ENCODE measurements at regions of chr12 and their contacts with region 1.

Region 1: DNA sequence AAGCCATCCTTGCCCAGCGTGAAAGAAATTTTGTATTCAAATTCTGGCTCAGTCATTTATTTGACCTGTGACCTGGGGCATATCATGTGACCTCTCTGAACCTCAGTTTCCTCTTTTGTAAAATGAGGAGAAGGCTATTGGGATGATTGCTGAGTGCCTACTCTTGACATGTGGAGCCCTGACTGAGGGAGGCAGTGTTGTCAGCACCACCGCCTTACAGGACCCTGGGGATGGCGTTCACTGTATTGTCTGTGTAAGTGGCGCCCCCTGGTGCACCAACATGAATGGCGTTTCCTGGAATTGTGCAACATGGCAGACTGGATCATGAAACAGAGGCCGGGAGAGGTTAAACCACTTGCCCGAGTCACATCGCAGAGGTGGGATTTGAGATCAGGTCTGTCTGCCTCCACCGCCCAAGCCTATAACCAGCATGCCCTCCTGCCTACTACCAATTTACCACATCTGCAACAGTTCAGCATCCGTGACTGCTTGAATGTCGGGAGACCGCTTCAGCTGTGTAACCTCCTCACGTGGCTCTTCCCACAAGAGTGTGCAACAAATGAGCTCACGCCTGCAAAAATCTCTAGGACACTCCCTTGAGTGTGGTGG is 20.1 kb upstream of the CCDC63 start:
- DNase-seq: peak; percentile 92
- ATAC-seq: peak; percentile 94

Region 2: DNA sequence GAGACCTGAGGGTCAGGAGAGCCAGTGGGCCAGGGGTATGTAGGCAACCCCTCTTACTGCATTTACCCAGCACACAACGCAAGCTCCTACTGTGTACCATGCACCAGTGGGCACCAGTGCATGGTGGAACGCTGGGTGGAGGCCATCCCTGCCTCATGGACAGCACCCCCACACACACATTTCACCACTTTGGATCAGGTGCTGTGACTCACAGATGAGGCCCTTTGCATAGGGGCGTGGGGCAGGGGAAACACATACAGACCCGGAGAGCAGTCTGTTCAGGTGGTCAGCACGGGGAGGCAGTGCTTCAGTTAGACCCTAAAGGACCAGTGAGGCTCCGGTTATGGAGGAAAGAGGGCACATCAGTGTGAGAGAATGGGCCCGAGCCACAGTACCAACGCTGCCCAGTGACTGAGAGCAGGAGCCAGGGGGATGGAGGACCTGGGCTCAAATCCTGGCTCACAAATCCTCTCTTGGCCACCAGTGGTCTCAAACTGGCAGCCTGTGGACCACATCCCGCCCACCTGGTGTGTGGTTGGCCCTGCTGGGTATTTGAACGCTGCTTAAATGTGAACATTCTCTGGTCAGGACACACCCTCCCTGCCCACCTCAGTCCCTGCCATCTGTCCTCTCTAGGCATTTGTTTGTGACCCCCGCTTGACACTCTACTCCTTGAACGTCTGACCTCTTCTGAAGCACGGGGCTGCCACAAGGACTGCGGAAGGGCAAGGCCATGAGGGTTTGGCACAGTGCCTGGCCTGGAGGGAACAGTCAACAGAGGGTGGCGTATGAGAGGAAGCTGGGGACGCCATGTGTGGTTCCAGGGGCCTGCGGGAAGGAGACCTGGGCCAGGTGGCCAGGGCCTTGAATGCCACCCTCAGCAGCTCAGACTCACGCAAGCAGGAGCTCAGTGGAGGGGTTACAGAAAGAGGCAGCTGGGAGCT is 1066.4 kb before region 1 on chr12:
- intact Hi-C with region 1: no loop called
- DNase-seq: no peak
- ATAC-seq: peak; percentile 83

Region 3: GRCh38 chr12:110449799-110450497 is 376.7 kb before region 1 on chr12 and contains the start of gene ARPC3:
- intact Hi-C with region 1: loop called (anchors 5 kb)
- DNase-seq: peak; percentile 98
- ATAC-seq: peak; percentile 99
- total RNA-seq, gene ARPC3: 94.4 TPM

Region 4: DNA sequence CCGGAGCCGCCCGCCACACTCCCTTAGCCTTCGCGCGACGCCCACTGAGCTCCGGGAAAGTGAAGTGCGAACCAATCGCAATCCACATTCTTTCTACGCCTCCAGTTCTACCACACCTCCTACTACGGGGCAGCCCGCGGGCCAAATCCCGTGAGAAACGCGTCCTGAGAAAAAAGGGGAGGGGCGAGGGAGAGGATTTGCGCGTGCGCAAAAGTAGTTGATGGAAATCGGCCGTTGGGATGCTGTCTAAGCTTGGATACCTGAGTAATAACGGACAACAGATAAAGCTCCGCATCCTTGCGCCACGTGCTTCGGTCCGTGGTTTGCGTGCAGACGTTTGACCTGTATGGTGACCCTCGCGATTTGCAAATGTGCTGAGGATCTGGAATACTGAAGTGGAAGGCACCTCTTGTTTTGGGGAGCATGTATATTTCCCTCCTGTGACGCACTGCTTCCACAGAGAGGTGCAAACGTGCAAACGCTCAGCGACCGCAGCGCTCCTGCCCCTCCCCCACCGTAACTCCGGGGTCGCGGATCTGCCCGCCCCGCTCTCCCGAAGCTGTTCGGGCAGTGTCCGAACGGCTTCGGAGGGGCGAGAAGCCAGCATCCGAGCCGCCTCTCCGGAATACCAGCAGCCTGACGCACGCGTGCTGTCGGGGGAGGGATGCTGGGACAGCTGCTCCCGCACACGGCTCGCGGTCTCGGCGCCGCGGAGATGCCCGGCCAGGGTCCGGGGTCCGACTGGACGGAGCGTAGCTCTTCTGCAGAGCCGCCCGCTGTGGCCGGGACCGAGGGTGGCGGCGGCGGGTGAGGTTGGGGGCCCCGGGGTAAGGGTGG is 358.3 kb before region 1 on chr12 and contains the starts of genes FAM216A and GPN3:
- intact Hi-C with region 1: loop called (anchors 2 kb)
- DNase-seq: peak; percentile 98
- ATAC-seq: peak; percentile 96
- total RNA-seq, gene FAM216A: 4.8 TPM
- total RNA-seq, gene GPN3: 24.7 TPM

Region 5: DNA sequence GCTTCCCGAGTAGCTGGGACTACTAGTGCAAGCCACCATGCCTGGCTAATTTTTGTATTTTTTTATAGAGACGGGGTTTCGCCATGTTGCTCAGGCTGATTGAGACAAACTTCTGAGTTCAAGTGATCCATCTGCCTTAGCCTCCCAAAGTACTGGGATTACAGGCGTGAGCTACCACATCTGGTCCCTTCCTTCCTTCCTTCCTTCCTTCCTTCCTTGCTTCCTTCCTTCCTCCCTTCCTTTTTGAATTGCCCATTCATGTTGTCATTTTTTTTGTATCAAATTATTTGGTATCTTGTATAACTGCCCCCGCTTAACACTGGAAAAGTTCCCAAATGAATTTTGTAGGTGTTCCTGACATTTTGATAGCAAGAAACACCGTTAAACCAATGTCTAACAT is 312.9 kb before region 1 on chr12:
- intact Hi-C with region 1: loop called (anchors 5 kb)
- DNase-seq: no peak
- ATAC-seq: no peak

Region 6: GRCh38 chr12:110577717-110578521 is 248.8 kb before region 1 on chr12:
- intact Hi-C with region 1: no loop called
- DNase-seq: no peak
- ATAC-seq: no peak

Region 7: GRCh38 chr12:110622582-110622981 is 204.1 kb before region 1 on chr12:
- intact Hi-C with region 1: loop called (anchors 5 kb)
- DNase-seq: no peak
- ATAC-seq: no peak

Region 8: DNA sequence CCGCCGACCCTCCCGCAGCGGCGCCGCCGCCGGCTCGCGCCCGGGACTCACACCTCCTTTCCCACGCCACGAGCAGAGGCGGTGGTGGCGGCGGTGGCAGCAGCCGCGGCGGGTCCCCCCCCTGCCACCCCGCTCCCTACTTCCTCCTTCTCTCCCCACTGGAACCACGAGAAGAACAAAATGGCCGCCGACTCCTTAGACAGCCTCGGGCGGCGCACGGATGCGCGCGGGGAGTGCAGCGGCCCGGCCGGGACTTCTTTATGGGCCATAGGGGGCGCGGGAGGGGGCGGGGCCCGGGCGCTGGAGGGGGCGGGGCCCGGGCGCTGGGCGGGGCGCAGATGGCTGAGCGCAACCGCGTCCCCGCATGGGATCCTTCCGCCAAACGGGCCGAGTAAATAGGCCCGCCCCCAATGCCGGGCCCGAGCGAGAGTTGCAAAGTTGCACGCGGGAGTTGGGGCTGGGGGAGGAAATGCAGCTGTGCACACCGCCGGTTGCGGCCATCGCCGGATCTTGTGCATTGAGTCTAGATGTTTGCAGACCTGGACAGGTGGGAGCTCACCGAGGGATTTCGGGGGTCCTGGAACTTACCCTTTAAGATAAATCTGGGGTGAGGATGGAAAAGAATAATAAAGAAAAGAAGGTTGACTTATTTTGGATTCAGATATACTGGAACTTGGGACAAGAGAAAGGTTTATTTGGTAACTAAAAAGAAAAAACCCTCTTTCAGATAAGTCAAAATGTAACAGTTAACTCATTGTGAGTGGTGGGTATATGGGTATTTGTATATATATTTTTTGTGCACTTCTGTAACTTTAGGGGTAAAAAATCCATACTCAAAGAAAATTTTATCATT is 83.8 kb before region 1 on chr12 and contains the start of gene PPP1CC:
- intact Hi-C with region 1: loop called (anchors 5 kb)
- DNase-seq: peak; percentile 98
- ATAC-seq: peak; percentile 97
- total RNA-seq, gene PPP1CC: 163 TPM

Region 9: DNA sequence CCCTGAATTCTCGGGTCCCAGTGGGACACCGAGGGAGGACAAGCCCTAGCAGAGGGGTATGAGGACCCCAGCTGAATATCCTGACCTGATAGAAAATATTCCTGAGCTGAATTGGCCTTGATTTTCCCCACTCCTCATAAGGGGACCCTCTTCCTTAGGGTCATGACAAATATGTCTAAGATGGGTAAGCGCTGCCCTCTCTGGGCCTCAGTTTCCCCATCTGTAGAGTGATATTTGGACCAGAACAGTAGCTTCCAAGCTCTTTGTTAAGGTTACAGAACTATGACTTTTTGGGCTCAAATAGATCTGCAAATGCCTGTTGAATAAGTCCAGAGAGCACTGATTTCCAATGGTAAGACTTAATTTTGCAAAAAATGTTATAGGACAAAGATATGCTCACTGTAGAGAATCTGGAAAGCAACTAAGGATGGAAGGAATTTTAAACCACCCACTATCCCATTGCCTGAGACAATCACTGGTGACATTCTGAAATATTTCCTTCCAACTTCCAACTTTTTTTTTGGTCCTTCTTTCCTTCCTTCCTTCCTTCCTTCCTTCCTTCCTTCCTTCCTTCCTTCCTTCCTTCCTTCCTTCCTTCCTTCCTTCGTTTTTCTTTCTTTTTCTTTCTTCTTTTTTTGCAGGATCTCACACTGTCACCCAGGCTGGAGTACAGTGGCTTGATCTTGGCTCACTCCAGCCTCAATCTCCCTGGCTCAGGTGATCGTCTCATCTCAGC is 61.7 kb after region 1 on chr12:
- intact Hi-C with region 1: loop called (anchors 5 kb)
- DNase-seq: no peak
- ATAC-seq: no peak

Measured in Right ventricle myocardium inferior (tissue), 1 donor.